ENCODE measurements at regions of chr15 and their contacts with region 1.

Region 1: DNA sequence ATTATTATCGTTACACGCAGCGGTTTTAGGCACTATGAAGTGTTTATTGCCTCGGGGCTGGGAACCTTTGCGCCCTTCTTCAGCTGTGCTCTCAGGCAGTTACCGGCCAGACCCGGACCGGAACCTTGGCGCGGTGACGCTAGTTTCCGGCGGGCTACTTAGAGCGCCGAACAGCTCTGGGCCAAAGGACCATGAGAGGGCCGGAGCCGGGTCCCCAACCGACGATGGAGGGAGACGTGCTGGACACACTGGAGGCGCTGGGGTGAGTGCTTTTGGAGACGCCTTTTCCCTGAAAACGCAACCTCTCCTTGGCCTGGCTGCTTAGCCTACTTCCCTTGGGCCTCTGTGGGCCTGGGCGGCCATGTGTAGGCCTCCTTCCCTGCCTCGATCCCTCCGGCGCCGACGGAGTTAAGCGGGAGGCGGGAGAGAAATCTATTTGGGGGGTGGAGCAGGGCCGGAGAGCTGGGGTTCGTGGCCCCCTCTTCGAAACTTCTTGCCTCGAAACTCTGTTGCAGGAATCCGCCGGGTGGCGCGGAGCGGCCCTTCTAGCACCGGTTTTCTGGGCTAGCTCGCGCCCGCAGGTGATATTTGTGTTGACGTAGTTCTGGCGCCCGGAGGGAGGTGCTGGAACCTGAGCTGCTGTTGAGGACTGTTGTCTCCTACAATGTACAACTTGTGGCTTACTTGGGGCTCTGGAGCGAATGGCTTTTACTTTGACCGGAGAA is at the start of gene FAM98B:
- DNase-seq: peak; percentile 72 to 90 (median 84)
- ATAC-seq: peak; percentile 90
- H3K4me3 ChIP-seq: peak within 1 kb of the TSS; percentile 80
- H3K4me3 Mint-ChIP-seq: peak within 1 kb of the TSS; percentile 94
- H3K27ac ChIP-seq: peak within 1 kb of the TSS; percentile 75 to 77
- H3K27ac Mint-ChIP-seq: peak within 1 kb of the TSS; percentile 95
- H3K4me1 ChIP-seq: peaks cover 14% of the 10 kb centered on the region
- H3K4me1 Mint-ChIP-seq: peaks cover 40% of the 10 kb centered on the region
- H3K27me3 ChIP-seq: no peaks in the 10 kb centered on the region
- H3K27me3 Mint-ChIP-seq: no peaks in the 10 kb centered on the region
- CTCF ChIP-seq: no peak
- total RNA-seq, gene FAM98B: 20.1 to 20.4 TPM

Region 2: DNA sequence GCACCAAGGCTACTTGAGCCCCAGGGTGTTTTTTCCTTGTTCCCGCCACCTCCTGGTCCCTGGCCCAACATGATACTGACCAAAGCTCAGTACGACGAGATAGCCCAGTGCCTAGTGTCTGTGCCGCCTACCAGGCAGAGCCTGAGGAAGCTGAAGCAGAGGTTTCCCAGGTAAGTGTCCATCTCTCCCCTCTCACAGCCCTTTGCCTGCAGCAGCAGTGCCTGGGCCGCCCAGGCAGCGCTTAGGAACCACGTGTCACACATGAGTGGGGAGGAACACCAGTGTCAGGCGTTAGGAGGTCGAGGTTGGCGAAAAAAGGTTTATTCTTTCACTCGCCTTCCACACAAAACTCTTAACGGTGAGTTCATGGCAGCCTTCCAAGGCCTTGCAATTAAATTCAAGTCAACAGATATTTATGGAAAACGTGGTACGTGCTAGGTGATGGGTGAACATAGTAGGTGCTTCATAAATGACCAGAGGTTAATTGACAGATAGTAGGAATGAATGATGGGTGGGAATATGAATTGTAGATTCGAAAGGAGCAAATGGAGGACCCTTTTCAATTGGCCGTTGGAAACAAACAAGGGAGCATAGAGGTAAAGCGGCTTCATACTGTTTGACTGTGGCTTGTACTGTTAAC is 1874.2 kb before region 1 on chr15:
- CTCF ChIA-PET with region 1: no interaction called
- POLR2A ChIA-PET with region 1: no interaction called
- intact Hi-C with region 1: loop called in 1 of 2 experiments (anchors 10 kb)
- DNase-seq: peak in 10 of 14 experiments; percentile 2 to 53 (median 12)
- ATAC-seq: peak; percentile 22
- H3K4me3 ChIP-seq: peak overlapping the region; percentile 67
- H3K4me3 Mint-ChIP-seq: peak overlapping the region; percentile 91
- H3K27ac ChIP-seq: peak overlapping the region in 1 of 2 donors; percentile 85
- H3K27ac Mint-ChIP-seq: peak overlapping the region; percentile 87
- H3K4me1 ChIP-seq: peaks cover 9% of the 10 kb centered on the region
- H3K4me1 Mint-ChIP-seq: peaks cover 37% of the 10 kb centered on the region
- H3K27me3 ChIP-seq: no peaks in the 10 kb centered on the region
- H3K27me3 Mint-ChIP-seq: no peaks in the 10 kb centered on the region
- CTCF ChIP-seq: no peak

Region 3: GRCh38 chr15:38440353-38441129 is 13.6 kb before region 1 on chr15:
- CTCF ChIA-PET with region 1: interaction called, 8 read pairs
- POLR2A ChIA-PET with region 1: interaction called, 11 read pairs
- intact Hi-C with region 1: no loop called
- DNase-seq: peak; percentile 10 to 88 (median 35)
- ATAC-seq: peak; percentile 96
- H3K4me3 ChIP-seq: no peak overlapping the region
- H3K4me3 Mint-ChIP-seq: no peak overlapping the region
- H3K27ac ChIP-seq: no peak overlapping the region
- H3K27ac Mint-ChIP-seq: no peak overlapping the region
- H3K4me1 ChIP-seq: peaks cover 7% of the 10 kb centered on the region
- H3K4me1 Mint-ChIP-seq: peaks cover 5% of the 10 kb centered on the region
- H3K27me3 ChIP-seq: peaks cover 0 to 7% of the 10 kb centered on the region in 2 experiments
- H3K27me3 Mint-ChIP-seq: peaks cover 37% of the 10 kb centered on the region
- CTCF ChIP-seq: peak; percentile 99